Activated B cell treated with CpG ODN at 0.5 μM for 24 hours (primary cell): ENCODE measurements at regions of chr16 and their contacts with region 1.

Region 1: DNA sequence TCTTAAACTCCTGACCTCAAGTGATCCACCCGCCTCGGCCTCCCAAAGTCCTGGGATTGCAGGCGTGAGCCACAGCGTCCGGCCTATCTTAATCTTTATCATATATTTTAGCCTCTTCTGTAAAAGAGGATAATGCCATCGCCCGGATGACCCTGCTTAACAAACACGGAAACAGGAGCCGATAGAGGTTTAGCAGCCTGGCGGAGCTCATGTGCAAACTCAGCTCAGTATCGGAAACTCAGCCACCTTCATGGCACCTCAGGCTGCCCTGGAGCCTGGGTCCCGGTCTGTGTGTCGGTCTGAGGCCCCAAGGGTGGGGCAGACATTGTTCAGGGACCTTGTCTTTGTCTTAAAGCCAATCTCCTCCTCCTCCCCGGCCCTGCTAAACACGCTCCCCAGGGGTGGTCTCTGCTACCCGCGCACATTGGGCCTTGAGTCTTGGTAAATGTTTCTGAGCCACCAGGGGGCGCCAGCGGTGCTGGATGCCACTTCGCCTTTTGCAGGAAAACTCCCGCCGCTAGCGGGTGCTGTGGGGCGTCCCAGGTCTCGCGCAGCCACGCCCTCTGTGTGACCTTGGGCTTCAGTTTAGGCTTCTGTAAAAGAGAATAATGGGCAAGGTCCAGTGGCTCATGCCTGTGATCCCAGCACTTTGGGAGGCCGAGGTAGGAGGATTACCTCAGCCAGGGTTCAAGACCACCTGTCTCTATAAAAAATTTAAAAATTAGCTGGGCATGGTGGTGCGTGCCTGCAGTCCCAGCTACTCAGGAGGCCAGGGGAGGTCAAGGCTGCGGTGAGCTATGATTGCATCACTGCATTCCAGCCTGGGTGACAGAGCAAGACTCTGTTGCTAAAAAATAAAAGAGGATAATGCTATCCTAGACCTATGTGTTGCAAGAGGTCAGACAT is 2.7 kb downstream of the CETP start:
- DNase-seq: peak; percentile 93
- ATAC-seq: peak; percentile 94
- H3K4me3 Mint-ChIP-seq: no peak overlapping the region
- H3K27ac Mint-ChIP-seq: peak overlapping the region; percentile 84
- H3K4me1 Mint-ChIP-seq: peaks cover 25% of the 10 kb centered on the region
- H3K27me3 Mint-ChIP-seq: no peaks in the 10 kb centered on the region
- CTCF ChIP-seq: peak; percentile 97

Region 2: DNA sequence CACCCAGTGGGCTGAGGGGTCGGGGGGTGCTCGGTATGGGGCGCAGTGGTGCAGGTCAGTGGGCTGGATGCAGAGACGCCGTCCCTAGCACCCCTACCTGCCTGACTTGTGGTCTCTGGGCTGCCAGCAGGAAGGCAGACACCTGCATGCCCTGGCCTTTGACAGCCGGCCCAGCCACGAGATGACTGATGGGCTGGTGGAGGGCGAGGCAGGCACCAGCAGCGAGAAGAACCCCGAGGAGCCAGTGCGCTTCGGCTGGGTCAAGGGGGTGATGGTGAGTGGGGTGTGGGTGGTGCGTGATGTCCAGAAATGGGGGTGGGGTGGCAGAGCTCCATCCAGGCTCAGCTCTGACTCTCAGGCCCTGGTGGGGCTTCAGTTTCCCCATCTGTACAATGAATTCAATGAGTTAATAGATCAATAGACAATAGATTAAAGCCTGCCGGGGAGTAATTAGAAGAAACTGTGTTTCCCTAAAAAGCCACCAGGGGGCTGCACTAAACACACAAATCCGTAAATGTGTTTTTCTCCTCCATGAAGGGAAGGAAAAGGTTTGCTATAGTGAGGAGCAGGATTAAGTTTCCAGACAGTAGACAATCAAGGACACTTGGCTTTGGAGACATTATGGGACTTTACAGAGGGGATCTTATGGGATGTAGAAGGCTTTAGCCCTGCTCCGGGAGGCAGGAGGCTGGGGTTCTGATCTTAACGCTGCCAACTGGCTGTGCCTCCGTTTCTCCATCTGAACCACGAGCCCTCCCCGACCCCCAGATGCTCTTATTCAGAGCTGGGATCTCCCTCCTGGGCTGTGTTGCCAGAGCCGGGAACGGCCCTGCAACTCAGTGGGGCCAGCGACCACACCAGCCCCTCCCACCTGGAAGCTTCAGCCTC is 97.3 kb before region 1 on chr16:
- CTCF ChIA-PET with region 1: interaction called, 10 read pairs
- POLR2A ChIA-PET with region 1: interaction called, 5 read pairs
- intact Hi-C with region 1: no loop called
- DNase-seq: no peak
- ATAC-seq: no peak
- H3K4me3 Mint-ChIP-seq: peak overlapping the region; percentile 24
- H3K27ac Mint-ChIP-seq: peak overlapping the region; percentile 69
- H3K4me1 Mint-ChIP-seq: peaks cover 46% of the 10 kb centered on the region
- H3K27me3 Mint-ChIP-seq: no peaks in the 10 kb centered on the region
- CTCF ChIP-seq: no peak

Region 3: DNA sequence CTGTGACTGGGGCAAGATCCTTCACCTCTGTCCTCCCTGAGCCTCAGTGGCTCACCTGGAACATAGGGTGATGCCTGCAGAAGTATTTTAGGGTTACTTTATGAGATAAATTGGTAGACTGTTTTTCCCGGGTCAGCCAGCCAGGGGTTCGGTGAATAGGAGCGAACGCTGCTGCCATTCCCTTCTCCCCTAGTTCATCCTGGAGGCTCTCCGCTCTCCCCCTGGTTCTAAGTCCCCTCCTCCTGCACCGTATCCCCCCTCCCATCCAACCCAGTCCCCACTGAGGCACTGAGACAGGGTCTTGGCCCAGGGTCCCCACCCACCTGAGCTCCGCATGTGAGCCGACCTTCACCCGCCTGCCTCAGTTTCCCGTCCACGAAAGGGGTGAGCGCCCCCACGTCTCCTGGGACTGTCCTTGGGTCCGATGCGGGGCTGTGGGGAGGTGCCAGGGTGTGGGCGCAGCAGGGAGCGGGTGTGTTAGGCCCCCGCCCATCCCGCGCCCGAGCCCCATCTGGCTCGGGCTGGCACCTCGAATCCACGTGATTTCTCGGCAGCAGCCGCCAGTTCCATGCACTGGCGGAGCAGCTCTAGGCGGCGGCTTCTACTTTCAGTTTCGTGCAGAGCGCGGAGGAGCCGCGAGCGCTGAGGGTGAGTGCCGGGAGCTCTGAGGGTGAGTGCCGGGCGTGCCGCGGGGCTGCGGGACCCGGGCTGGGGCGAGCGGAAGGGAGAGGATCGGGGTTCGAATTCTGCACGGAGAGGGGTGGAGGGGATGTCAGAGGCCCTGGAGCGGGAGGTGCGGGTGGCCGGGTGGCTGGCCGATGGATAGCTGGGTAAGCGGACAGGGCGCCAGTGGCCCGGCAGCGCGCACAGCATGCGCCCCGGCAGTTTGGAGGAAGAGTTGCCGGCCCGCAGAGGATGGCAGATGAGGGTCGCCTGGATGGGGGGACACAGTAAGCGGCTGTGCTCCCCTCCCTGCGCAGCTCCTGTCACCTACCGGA is 24.8 kb after region 1 on chr16 and contains the start of gene NLRC5:
- CTCF ChIA-PET with region 1: interaction called, 16 read pairs
- POLR2A ChIA-PET with region 1: interaction called, 233 read pairs
- intact Hi-C with region 1: loop called (anchors 1 kb)
- DNase-seq: peak; percentile 76
- ATAC-seq: peak; percentile 89
- H3K4me3 Mint-ChIP-seq: peak within 1 kb of the TSS; percentile 96
- H3K27ac Mint-ChIP-seq: peak within 1 kb of the TSS; percentile 93
- H3K4me1 Mint-ChIP-seq: peaks cover 86% of the 10 kb centered on the region
- H3K27me3 Mint-ChIP-seq: no peaks in the 10 kb centered on the region
- CTCF ChIP-seq: no peak
- total RNA-seq, gene NLRC5: 296 and 372 TPM in 2 replicates

Region 4: GRCh38 chr16:57013229-57013628 is 48.7 kb after region 1 on chr16:
- CTCF ChIA-PET with region 1: interaction called, 7 read pairs
- POLR2A ChIA-PET with region 1: interaction called, 12 read pairs
- intact Hi-C with region 1: loop called (anchors 1 kb)
- DNase-seq: no peak
- ATAC-seq: no peak
- H3K4me3 Mint-ChIP-seq: no peak overlapping the region
- H3K27ac Mint-ChIP-seq: peak overlapping the region; percentile 88
- H3K4me1 Mint-ChIP-seq: peaks cover 58% of the 10 kb centered on the region
- H3K27me3 Mint-ChIP-seq: no peaks in the 10 kb centered on the region
- CTCF ChIP-seq: no peak

Region 5: DNA sequence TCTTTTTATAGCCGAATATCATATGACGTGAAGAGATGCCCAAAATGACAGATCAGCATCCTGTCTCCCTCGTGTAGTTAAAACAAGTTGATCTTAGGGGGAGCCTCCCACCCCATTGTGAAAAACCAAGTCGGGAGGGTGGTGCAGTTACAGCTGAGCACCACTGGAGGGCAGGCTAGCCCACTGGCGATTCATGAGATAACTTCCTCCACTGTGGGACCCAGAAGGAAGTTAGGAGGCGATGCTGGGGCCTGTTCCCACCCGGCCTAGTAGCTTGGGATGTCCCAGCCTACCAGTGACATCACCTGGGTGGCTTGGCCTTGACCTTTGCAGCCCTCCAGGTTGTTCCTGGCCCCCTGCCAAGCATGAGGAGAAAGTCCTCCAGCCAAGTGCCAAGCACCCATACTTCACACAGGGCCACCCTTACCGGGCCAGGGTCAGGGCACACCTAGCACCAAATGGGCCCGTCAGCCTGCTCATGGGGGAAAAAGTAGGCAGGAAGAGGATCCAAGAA is 119.8 kb after region 1 on chr16:
- CTCF ChIA-PET with region 1: interaction called, 32 read pairs
- POLR2A ChIA-PET with region 1: no interaction called
- intact Hi-C with region 1: loop called (anchors 1 kb)
- DNase-seq: peak; percentile 50
- ATAC-seq: peak; percentile 89
- H3K4me3 Mint-ChIP-seq: no peak overlapping the region
- H3K27ac Mint-ChIP-seq: peak overlapping the region; percentile 57
- H3K4me1 Mint-ChIP-seq: peaks cover 8% of the 10 kb centered on the region
- H3K27me3 Mint-ChIP-seq: no peaks in the 10 kb centered on the region
- CTCF ChIP-seq: peak; percentile 77

Region 6: GRCh38 chr16:57167953-57168352 is 203.5 kb after region 1 on chr16:
- CTCF ChIA-PET with region 1: interaction called, 4 read pairs
- POLR2A ChIA-PET with region 1: interaction called, 5 read pairs
- intact Hi-C with region 1: loop called (anchors 1 kb)
- DNase-seq: no peak
- ATAC-seq: peak; percentile 67
- H3K4me3 Mint-ChIP-seq: no peak overlapping the region
- H3K27ac Mint-ChIP-seq: no peak overlapping the region
- H3K4me1 Mint-ChIP-seq: peaks cover 14% of the 10 kb centered on the region
- H3K27me3 Mint-ChIP-seq: no peaks in the 10 kb centered on the region
- CTCF ChIP-seq: no peak